Mucosa of descending colon (tissue), 3 donors: ENCODE measurements at regions of chr1 and their contacts with region 1.

Region 1: GRCh38 chr1:222455188-222455879 is 92.6 kb downstream of the HHIPL2 start:
- DNase-seq: peak; percentile 71 to 92 (median 82)
- ATAC-seq: peak; percentile 95
- H3K4me3 ChIP-seq: no peak overlapping the region
- H3K4me1 ChIP-seq: no peaks in the 10 kb centered on the region
- CTCF ChIP-seq: peak; percentile 82

Region 2: GRCh38 chr1:222095606-222096475 is 359.5 kb before region 1 on chr1:
- intact Hi-C with region 1: loop called in 1 of 2 experiments (anchors 10 kb)
- DNase-seq: peak in 2 of 3 donors; percentile 49 to 65
- ATAC-seq: peak; percentile 70
- H3K4me3 ChIP-seq: no peak overlapping the region
- H3K4me1 ChIP-seq: no peaks in the 10 kb centered on the region
- CTCF ChIP-seq: peak; percentile 65